ENCODE measurements at regions of chr10 and their contacts with region 1.

Region 1: DNA sequence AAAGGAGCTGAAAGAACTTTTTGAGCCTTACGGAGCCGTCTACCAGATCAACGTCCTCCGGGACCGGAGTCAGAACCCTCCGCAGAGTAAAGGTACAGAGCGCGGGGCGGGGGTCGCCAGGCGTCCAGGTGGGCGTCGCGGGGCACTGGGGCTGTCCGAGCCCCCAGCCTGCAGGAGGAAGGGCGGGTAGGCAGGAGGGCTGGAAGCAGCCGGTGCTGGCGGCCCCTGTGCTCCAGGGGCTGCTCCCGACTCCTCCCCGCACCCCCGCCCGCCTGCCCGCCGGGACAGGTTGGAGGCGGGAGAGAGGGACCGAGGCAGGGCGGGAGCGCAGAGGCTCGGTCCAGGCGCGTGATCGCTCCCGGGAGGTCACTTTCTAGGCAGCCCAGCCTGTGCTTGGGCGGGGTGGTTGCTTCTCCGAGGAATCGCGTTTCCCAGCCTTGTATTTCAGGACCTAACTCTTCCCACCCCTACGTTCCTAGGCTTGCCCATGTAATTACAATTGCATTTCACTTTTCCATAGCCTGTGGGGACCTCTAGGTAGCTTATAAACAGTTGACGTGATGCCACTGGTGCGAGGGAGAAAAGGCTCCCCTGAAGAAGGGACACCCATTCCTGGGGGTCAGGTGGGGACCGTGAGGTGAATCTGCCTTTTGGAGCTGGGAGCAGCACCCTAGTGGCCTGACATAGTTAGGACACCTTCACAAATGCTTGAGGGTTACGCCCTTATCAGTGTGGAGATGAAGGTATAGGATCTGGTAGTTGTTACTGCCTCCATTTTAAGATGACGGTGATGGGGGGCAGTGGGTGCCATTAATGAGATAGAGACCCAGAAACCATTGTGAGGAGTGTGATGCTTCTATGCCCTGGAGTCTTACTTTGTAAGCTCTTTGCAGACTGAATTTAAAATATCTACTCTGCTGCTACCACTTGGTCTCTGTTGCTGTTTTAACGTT is 148.2 kb downstream of the CELF2 start:
- DNase-seq: peak; percentile 84
- H3K4me3 Mint-ChIP-seq: no peak overlapping the region
- H3K27ac Mint-ChIP-seq: no peak overlapping the region
- H3K4me1 Mint-ChIP-seq: peaks cover 26% of the 10 kb centered on the region
- H3K27me3 Mint-ChIP-seq: no peaks in the 10 kb centered on the region

Region 2: DNA sequence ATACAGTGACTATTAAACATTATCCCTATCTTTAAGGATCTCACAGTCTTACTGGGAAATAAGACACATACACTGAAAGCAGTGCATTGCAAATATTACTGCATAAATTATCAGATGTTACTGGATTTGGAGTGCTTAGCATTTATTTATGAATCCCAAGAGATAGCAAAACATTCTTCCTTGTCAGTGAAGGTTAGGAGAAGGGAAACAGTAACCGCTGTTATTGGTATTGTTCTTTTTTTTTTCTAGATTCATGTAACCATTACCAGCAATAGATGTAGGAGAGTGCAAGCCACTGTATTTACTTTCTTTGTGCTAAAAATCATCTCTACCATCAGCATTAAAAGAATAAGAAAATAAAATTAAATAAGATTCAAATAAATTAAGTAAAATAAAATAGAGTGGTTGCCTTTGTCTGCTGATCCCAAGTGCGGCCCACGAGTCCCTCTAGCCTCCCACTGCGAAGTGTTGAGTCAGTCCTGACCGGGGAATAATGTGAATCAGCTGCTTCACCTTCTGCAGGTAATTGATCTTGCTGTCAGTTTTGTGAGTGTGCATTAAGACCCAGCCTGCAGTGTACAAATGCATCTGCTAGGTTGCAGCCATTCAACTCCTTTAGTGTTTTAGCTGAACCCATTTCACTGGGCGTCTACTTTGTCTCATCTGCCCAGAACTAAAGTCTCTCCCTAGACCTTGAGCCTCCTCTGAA is 1766.4 kb before region 1 on chr10:
- CTCF ChIA-PET with region 1: no interaction called
- intact Hi-C with region 1: no loop called
- DNase-seq: no peak
- H3K4me3 Mint-ChIP-seq: no peak overlapping the region
- H3K27ac Mint-ChIP-seq: no peak overlapping the region
- H3K4me1 Mint-ChIP-seq: no peaks in the 10 kb centered on the region
- H3K27me3 Mint-ChIP-seq: peaks cover 13% of the 10 kb centered on the region

Region 3: DNA sequence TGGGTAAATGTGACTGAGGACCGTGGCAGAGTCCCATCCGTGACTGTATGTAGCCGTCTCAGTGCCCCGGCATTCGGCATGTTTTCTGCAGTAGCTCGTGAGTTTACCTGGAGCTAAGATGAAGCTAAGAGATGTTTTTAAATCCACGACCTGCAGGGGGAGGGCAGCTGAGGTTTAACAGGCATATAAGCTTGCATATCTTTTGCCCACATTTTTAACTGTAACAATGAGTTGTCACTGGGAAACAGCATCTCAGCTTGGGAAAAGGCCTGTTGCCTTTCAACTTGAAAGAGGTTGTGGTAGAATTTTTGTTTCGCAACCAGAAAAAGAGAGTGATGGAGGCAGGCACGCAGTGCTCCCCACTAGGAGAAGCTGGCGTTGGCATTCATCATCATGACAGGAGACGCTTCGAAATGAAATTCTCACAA is 70.5 kb before region 1 on chr10:
- CTCF ChIA-PET with region 1: no interaction called
- intact Hi-C with region 1: no loop called
- DNase-seq: no peak
- H3K4me3 Mint-ChIP-seq: no peak overlapping the region
- H3K27ac Mint-ChIP-seq: no peak overlapping the region
- H3K4me1 Mint-ChIP-seq: peaks cover 6% of the 10 kb centered on the region
- H3K27me3 Mint-ChIP-seq: peaks cover 2% of the 10 kb centered on the region

Region 4: GRCh38 chr10:11113156-11113555 is 52.7 kb before region 1 on chr10:
- CTCF ChIA-PET with region 1: interaction called, 10 read pairs
- intact Hi-C with region 1: loop called (anchors 1 kb)
- DNase-seq: peak; percentile 41
- H3K4me3 Mint-ChIP-seq: no peak overlapping the region
- H3K27ac Mint-ChIP-seq: no peak overlapping the region
- H3K4me1 Mint-ChIP-seq: peaks cover 21% of the 10 kb centered on the region
- H3K27me3 Mint-ChIP-seq: no peaks in the 10 kb centered on the region

Region 5: GRCh38 chr10:11154333-11154732 is 11.5 kb before region 1 on chr10:
- CTCF ChIA-PET with region 1: interaction called, 99 read pairs
- intact Hi-C with region 1: loop called (anchors 1 kb)
- DNase-seq: no peak
- H3K4me3 Mint-ChIP-seq: no peak overlapping the region
- H3K27ac Mint-ChIP-seq: no peak overlapping the region
- H3K4me1 Mint-ChIP-seq: peaks cover 82% of the 10 kb centered on the region
- H3K27me3 Mint-ChIP-seq: no peaks in the 10 kb centered on the region

Measured in activated naive CD4-positive, alpha-beta T cell treated with anti-CD3 and anti-CD28 coated beads for 36 hours (primary cell).